ENCODE measurements at regions of chr11 and their contacts with region 1.

Region 1: DNA sequence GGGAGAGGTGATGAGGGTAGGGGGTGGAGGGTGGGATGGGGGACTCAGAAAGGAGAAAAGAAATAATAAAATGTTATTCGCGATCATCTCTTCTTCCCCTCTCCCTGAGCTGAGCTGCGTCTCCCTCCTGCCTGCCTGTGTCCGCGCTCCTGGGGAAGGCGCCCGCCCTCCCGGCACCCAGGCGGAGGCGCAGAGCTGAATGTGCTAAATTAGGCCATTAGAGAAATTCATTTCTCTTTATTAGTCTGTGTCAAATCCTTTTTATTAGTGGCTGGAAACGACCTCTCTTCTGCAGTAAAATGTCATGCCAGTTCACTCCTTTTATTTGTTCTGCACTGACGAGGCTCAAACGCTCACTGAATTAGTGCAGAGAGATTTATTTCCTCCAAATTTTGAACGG is 116.1 kb downstream of the FEZ1 start:
- DNase-seq: no peak
- H3K4me3 ChIP-seq: no peak overlapping the region
- H3K27ac ChIP-seq: no peak overlapping the region
- H3K4me1 ChIP-seq: no peaks in the 10 kb centered on the region
- CTCF ChIP-seq: no peak

Region 2: GRCh38 chr11:125364121-125364826 is 15.7 kb before region 1 on chr11:
- CTCF ChIA-PET with region 1: no interaction called
- POLR2A ChIA-PET with region 1: no interaction called
- intact Hi-C with region 1: no loop called
- DNase-seq: no peak
- H3K4me3 ChIP-seq: no peak overlapping the region
- H3K27ac ChIP-seq: no peak overlapping the region
- H3K4me1 ChIP-seq: no peaks in the 10 kb centered on the region
- CTCF ChIP-seq: no peak

Region 3: GRCh38 chr11:125394296-125394695 is 14.3 kb after region 1 on chr11:
- CTCF ChIA-PET with region 1: no interaction called
- POLR2A ChIA-PET with region 1: no interaction called
- intact Hi-C with region 1: loop called (anchors 2 kb)
- DNase-seq: no peak
- H3K4me3 ChIP-seq: no peak overlapping the region
- H3K27ac ChIP-seq: no peak overlapping the region
- H3K4me1 ChIP-seq: no peaks in the 10 kb centered on the region
- CTCF ChIP-seq: no peak

Region 4: DNA sequence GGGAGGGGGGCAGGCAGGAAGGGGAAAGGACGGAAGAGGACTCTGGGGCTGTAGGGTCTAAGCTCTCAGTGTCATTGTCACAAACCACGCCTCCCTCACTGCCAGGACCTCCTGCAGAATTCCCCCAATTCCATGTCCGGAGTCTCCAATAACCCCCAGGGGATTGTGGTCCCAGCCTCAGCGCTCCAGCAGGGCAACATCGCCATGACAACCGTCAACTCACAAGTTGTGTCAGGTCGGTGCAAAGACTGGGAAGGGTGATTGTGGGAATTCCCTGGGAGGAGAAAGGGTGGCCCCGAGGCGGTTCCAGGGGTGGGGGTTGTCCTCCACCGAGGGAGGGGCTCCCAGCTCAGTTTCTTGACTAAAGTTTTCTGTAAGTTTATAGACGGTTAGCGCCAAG is 30.1 kb after region 1 on chr11:
- CTCF ChIA-PET with region 1: no interaction called
- POLR2A ChIA-PET with region 1: no interaction called
- intact Hi-C with region 1: no loop called
- DNase-seq: no peak
- H3K4me3 ChIP-seq: no peak overlapping the region
- H3K27ac ChIP-seq: no peak overlapping the region
- H3K4me1 ChIP-seq: no peaks in the 10 kb centered on the region
- CTCF ChIP-seq: no peak